Activated T-helper 1 cell treated with anti-CD3 and anti-CD28 coated beads, Interleukin-12 subunit alpha, Interleukin-12 subunit beta, Interleukin-2, Interleukin-4 antibody, amounts not matched to agents 30 ng/mL and 10 ng/mL and 1 ng/mL, durations not matched to agents 14 hours and 24 hours and 36 hours (primary cell): ENCODE measurements at regions of chr3 and their contacts with region 1.

Region 1: GRCh38 chr3:46976326-46977190 is at the start of gene CCDC12:
- DNase-seq: peak; percentile 93
- H3K4me3 Mint-ChIP-seq: peak within 1 kb of the TSS; percentile 97
- H3K27ac Mint-ChIP-seq: peak within 1 kb of the TSS; percentile 100
- H3K4me1 Mint-ChIP-seq: peaks cover 52% of the 10 kb centered on the region
- H3K27me3 Mint-ChIP-seq: no peaks in the 10 kb centered on the region
- total RNA-seq, gene CCDC12: 68.7 and 69.1 TPM in 2 replicates

Region 2: GRCh38 chr3:46947981-46948791 is 28.4 kb before region 1 on chr3:
- intact Hi-C with region 1: loop called (anchors 1 kb)
- DNase-seq: peak; percentile 57
- H3K4me3 Mint-ChIP-seq: peak overlapping the region; percentile 53
- H3K27ac Mint-ChIP-seq: peak overlapping the region; percentile 79
- H3K4me1 Mint-ChIP-seq: peaks cover 85% of the 10 kb centered on the region
- H3K27me3 Mint-ChIP-seq: no peaks in the 10 kb centered on the region

Region 3: DNA sequence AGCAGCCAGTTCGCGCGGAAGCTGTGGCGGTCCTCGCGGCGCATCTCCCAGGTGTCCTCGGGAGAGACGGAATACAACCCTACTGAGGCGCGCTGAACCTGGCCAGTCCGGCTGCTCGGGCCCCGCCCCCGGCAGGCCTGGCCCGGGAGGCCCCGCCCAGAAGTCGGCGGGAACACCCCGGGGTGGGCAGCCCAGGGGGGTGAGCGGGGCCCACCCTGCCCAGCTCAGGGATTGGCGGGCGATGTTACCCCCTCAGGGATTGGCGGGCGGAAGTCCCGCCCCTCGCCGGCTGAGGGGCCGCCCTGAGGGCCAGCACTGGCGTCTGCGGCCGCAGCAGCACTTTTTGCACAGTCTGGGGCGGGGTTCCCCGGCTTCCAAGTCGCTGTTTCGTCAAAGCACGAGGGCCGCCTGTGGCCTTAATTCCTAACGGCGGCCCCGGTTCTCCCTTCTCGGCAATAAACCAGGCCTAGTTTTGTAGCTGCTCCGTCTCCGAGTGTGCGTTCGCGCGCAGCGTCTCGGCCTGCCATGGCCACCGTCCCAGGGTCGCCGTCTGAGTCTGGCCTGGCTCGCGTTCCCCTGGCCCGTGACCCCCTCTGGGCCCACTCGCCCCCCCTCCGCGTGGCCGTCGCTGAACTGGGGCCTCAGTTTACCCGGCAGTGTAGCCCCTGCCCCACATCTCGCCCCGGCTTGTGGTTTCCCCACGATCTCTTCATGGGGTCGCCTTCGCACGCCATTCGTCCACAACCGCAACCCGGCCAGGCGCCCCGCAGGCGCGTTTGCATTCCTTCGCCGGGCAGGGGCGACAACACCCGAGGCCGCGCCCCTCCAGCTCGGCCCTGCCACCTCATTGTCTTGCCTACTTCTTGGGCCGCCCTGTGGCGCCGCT is 32.9 kb after region 1 on chr3:
- intact Hi-C with region 1: loop called (anchors 2 kb)
- DNase-seq: peak; percentile 47
- H3K4me3 Mint-ChIP-seq: no peak overlapping the region
- H3K27ac Mint-ChIP-seq: peak overlapping the region; percentile 29
- H3K4me1 Mint-ChIP-seq: peaks cover 14% of the 10 kb centered on the region
- H3K27me3 Mint-ChIP-seq: no peaks in the 10 kb centered on the region

Region 4: GRCh38 chr3:47164007-47164881 is 187.7 kb after region 1 on chr3 and contains the start of gene SETD2:
- intact Hi-C with region 1: loop called (anchors 1 kb)
- DNase-seq: peak; percentile 75
- H3K4me3 Mint-ChIP-seq: peak within 1 kb of the TSS; percentile 99
- H3K27ac Mint-ChIP-seq: peak within 1 kb of the TSS; percentile 100
- H3K4me1 Mint-ChIP-seq: peaks cover 53% of the 10 kb centered on the region
- H3K27me3 Mint-ChIP-seq: peaks cover 2% of the 10 kb centered on the region
- total RNA-seq, gene SETD2: 41.2 and 45.7 TPM in 2 replicates

Region 5: GRCh38 chr3:47475570-47476329 is 499.2 kb after region 1 on chr3 and contains the start of gene SCAP:
- intact Hi-C with region 1: loop called (anchors 2 kb)
- DNase-seq: peak; percentile 95
- H3K4me3 Mint-ChIP-seq: peak within 1 kb of the TSS; percentile 92
- H3K27ac Mint-ChIP-seq: peak within 1 kb of the TSS; percentile 93
- H3K4me1 Mint-ChIP-seq: peaks cover 26% of the 10 kb centered on the region
- H3K27me3 Mint-ChIP-seq: no peaks in the 10 kb centered on the region
- total RNA-seq, gene SCAP: 86.3 and 91.2 TPM in 2 replicates